Right lobe of liver (tissue), 6 donors: ENCODE measurements at regions of chr1 and their contacts with region 1.

Region 1: DNA sequence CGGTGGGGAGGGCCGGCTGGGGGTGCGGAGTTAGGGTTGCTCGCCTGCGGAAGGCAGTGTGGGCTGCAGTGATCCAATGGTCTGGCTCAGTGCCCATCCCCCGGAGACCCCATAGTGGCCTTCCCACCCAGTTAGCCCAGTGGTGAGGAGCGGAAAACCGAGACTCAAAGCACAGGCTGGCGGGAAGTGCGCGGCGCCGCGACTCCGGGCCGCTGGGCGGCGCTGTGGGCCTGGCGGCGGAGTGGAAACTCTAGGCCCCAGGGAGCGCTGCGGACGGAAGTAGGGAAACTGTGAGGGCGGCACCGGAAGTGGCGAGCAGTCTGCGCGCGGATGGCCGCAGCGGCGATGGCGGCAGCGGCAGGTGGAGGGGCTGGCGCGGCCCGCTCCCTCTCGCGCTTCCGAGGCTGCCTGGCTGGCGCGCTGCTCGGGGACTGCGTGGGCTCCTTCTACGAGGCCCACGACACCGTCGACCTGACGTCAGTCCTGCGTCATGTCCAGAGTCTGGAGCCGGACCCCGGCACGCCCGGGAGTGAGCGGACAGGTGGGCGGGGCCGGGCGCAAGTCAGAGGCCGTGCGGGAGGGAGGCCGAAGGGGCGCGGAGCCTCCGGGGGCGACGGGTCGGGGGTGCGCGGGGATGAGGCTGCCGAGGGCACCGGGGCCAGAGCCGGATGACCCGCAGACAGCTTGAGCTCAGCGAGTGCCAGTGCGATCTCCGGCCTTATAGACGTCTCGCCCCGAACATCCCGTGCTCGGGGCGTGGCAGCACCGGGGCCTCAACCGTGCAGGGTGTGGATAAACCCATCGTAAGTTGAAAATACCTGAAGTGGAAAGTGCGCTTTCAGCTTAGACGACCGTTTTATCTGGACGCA is at the start of gene ADPRS:
- DNase-seq: peak; percentile 91 to 93 (median 93)
- ATAC-seq: peak; percentile 92 to 97 (median 92)
- H3K4me3 ChIP-seq: peak within 1 kb of the TSS; percentile 84 to 94 (median 87)
- H3K27ac ChIP-seq: peak within 1 kb of the TSS; percentile 69 to 81 (median 79)
- H3K4me1 ChIP-seq: peaks cover 0 to 12% (median 0%) of the 10 kb centered on the region in 4 donors
- H3K27me3 ChIP-seq: no peaks in the 10 kb centered on the region
- CTCF ChIP-seq: peak; percentile 98 to 99 (median 99)
- POLR2A ChIP-seq: peak; percentile 86
- total RNA-seq, gene ADPRS: 9.1 to 30.7 (median 14.9) TPM

Region 2: DNA sequence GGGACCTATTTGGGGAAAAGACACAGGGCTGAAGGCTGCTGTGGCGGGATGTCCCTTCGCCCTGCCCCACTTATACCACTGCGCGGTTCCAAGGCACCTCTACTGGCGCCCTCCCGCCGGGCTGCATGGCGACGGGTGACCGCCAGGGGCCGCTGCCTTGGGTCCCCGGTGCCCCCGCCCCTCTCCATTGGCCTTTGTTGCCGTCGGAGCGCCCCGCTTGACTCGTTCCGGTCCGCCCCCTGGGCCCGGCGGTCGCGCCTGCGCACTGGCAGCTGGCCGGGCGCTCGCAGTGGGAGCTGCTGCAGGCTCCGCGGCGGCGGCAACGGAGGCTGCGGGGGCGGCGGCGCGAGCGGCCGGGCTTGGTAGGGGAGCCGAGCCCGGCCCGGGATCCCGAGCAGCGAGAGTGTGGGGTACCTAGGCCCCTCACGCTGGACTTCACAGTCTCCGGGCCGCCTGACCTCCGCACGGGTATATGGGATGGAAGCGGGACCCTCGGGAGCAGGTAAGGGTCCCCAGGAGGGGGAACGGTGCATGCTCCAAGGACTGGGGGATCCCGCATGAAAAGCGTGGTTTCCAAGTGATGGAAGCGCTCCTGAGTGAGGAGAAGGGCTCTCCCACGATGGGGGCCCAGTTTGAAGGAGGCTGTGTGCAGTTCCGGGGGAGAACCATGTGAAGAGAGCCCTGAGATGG is 205.7 kb before region 1 on chr1 and contains the start of gene AGO1:
- intact Hi-C with region 1: loop called in 1 of 2 experiments (anchors 5 kb)
- DNase-seq: peak; percentile 96
- ATAC-seq: peak; percentile 97 to 99 (median 98)
- H3K4me3 ChIP-seq: peak within 1 kb of the TSS; percentile 90 to 94 (median 93)
- H3K27ac ChIP-seq: peak within 1 kb of the TSS; percentile 7 to 68 (median 56)
- H3K4me1 ChIP-seq: peaks cover 0 to 7% (median 0%) of the 10 kb centered on the region in 4 donors
- H3K27me3 ChIP-seq: no peaks in the 10 kb centered on the region
- CTCF ChIP-seq: peak; percentile 98 to 100 (median 98)
- POLR2A ChIP-seq: peak; percentile 80
- total RNA-seq, gene AGO1: 8.7 to 11.2 (median 10.5) TPM